ENCODE measurements at regions of chr12 and their contacts with region 1.

Region 1: DNA sequence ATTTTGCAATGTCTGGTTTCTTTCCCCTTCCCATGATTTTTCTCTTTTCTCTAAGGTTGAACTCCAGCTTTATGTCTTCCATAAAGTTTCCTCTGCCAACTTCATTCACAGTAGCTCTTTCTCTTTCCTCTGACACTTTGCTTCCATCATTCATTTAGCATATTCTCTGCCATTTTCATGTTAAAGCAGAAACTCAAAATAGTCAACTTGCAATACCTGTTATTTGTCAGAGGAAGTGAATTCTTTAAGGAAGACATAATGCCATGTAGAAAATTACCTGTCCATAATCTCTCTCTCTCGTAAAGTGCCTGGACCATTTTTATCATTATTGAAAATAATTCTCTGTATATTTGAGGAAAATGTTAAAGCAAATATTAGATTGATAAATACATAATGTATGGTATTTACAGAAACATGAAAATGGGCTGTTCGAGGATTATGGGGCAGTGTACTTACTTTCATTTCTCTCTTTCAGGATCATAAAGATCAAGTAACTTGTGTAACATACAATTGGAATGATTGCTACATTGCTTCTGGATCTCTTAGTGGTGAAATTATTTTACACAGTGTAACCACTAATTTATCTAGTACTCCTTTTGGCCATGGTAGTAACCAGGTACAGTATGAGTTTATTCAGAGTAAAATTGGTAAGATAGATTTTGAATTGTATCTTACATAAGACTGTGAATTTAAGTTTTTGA is 12.6 kb downstream of the NEDD1 start:
- DNase-seq: no peak
- ATAC-seq: peak; percentile 47
- H3K4me3 ChIP-seq: no peak overlapping the region
- H3K27ac ChIP-seq: no peak overlapping the region
- H3K4me1 ChIP-seq: peaks cover 4% of the 10 kb centered on the region; the same call in 1 of the 2 replicates
- H3K27me3 ChIP-seq: no peaks in the 10 kb centered on the region
- CTCF ChIP-seq: no peak
- EP300 ChIP-seq: no peak
- POLR2A ChIP-seq: no peak
- RAD21 ChIP-seq: no peak

Region 2: GRCh38 chr12:96698521-96698920 is 221.1 kb before region 1 on chr12:
- CTCF ChIA-PET with region 1: no interaction called
- POLR2A ChIA-PET with region 1: no interaction called
- RAD21 ChIA-PET with region 1: no interaction called
- SMC1A ChIA-PET with region 1: no interaction called
- in situ Hi-C with region 1: no loop called
- intact Hi-C with region 1: no loop called
- DNase-seq: no peak
- ATAC-seq: peak; percentile 31; the same call in 1 of the 3 replicates
- H3K4me3 ChIP-seq: no peak overlapping the region
- H3K27ac ChIP-seq: no peak overlapping the region
- H3K4me1 ChIP-seq: no peaks in the 10 kb centered on the region
- H3K27me3 ChIP-seq: no peaks in the 10 kb centered on the region
- CTCF ChIP-seq: no peak
- EP300 ChIP-seq: no peak
- POLR2A ChIP-seq: no peak
- RAD21 ChIP-seq: peak; percentile 27; the same call in 1 of the 2 replicates

Region 3: DNA sequence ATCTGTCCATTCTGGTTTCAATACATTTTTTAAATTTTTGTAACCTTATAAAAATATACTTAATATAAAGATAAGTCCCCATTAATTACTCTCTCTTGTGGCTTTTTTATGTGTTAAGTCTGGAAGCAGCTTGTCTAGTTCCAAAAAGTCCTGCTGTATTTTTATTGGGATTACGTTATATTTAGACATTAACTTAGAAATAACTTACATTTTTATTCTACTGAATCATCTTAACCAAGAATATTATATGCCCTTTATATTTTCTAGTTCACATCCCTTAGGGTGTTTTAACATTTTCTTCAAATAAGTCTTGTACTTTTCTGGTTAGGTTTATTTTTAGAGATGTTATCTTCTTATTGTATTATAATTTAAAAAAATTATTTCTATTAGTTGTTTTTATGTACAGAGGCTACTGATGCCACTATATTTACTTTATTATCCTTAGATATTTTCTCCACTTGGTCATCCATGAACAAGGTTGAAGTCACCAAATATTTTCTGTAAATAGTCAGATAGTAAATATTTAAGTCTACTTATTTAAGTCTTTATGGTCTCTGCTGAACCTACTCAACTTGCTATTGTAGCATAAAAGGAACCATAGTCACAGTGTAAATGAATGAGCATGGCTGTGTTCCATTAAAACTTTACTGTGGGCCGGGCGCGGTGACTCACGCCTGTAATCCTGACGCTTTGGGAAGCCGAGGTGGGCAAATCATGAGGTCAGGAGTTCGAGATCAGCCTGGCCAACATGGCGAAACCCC is 145.0 kb before region 1 on chr12:
- CTCF ChIA-PET with region 1: no interaction called
- POLR2A ChIA-PET with region 1: no interaction called
- RAD21 ChIA-PET with region 1: no interaction called
- SMC1A ChIA-PET with region 1: no interaction called
- in situ Hi-C with region 1: no loop called
- intact Hi-C with region 1: no loop called
- DNase-seq: no peak
- ATAC-seq: no peak
- H3K4me3 ChIP-seq: no peak overlapping the region
- H3K27ac ChIP-seq: no peak overlapping the region
- H3K4me1 ChIP-seq: no peaks in the 10 kb centered on the region
- H3K27me3 ChIP-seq: no peaks in the 10 kb centered on the region
- CTCF ChIP-seq: no peak
- EP300 ChIP-seq: no peak
- POLR2A ChIP-seq: no peak
- RAD21 ChIP-seq: no peak

Region 4: DNA sequence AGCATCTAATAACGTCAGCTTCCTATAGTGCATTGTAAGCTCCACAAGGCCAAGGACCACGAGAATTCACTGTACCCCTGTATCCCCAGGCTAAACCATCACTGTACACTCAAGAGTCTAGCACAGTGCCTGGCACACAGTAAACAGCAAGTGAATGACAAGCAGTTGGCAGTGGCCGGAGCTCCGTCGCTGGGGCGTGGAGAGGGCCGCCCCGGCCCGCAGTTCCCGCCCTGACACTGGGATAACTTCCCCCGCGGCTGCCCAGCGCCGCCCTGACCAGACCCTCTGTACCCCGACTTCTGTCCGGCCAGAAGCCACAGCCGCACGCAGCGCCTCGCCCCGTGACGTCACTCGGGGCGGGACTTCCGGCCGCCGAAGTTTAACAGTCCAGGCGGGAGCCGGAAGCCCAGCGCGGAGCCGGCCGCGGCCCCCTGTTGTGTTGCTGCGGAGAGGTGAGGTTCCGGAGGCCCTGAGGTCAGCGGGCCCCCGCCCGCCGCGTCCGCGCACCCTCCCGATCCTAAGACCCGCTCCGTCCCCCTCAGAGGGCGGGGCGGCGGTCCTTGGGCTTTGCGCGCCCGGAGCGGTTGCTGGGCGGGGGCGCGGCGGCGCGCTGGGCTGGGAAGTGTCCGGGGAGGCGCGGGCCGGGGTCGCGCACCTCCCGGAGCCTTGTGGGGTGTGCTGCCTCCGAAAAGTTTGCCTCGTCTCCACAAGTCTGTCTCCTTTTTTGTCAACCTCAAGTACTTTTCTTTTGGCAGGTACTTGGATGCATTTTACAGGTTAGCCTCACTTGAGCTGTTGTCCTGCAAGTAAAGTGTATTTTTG is 12.6 kb before region 1 on chr12 and contains the start of gene NEDD1:
- CTCF ChIA-PET with region 1: interaction called, 4 read pairs
- POLR2A ChIA-PET with region 1: interaction called, 6 read pairs
- RAD21 ChIA-PET with region 1: interaction called, 5 read pairs
- SMC1A ChIA-PET with region 1: interaction called, 15 read pairs
- in situ Hi-C with region 1: no loop called
- intact Hi-C with region 1: no loop called
- DNase-seq: no peak
- ATAC-seq: peak; percentile 89
- H3K4me3 ChIP-seq: peak within 1 kb of the TSS; percentile 86
- H3K27ac ChIP-seq: peak within 1 kb of the TSS; percentile 84
- H3K4me1 ChIP-seq: peaks cover 14% of the 10 kb centered on the region
- H3K27me3 ChIP-seq: no peaks in the 10 kb centered on the region
- CTCF ChIP-seq: no peak
- EP300 ChIP-seq: peak in 1 of 2 experiments; percentile 20; a peak in 1 of 4 replicates
- POLR2A ChIP-seq: peak; percentile 92
- RAD21 ChIP-seq: no peak
- polyA plus RNA-seq, gene NEDD1: 18.5 to 21.9 TPM